Activated CD4-positive, alpha-beta memory T cell treated with anti-CD3 and anti-CD28 coated beads for 36 hours (primary cell): ENCODE measurements at regions of chr9 and their contacts with region 1.

Region 1: GRCh38 chr9:121074635-121075385 is at the start of gene CNTRL:
- DNase-seq: peak; percentile 97
- H3K4me3 Mint-ChIP-seq: peak within 1 kb of the TSS; percentile 100
- H3K27ac Mint-ChIP-seq: peak within 1 kb of the TSS; percentile 85
- H3K4me1 Mint-ChIP-seq: peaks cover 46% of the 10 kb centered on the region
- H3K27me3 Mint-ChIP-seq: no peaks in the 10 kb centered on the region
- total RNA-seq, gene CNTRL: 60.0 to 65.1 TPM

Region 2: DNA sequence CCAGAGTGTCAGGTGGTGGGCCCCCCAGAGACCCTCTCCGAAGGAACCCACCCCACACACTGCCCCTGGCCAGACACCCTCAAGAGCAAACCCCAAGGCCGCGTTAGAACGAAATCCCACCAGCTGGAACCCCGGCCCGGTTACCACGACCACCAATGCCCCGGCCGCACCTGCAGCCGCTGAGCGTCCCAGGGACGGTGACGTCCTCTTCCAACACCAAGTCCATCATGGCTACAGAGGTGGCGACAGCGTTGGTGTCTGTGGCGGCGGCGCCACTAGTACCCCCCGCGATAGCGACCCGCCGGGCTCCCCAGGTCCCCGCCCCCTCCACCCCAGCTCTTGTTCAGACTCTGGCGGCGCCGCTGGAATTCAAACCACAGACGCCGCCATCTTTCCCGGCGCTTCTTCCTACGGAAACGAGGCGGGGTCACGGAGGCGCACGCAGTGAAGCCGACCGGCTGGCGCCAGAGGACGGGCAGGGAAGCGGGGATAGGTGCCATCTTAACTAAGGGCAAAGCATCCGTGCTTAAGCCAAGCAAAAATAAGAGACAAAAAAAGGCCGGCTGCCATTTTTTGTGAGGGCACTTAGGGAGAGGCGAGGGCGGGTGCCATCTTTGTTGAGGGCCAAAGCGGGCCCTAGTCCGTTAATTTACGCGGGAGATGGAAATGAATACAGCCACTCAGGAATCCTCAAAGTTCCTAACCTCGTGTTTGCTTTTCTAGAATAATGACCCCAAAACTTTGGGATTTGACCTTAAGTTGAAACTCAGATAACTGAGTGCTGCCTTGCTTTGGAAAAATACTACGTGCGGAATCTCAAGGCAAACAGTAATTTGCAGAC is 494.8 kb before region 1 on chr9 and contains the start of gene CDK5RAP2:
- CTCF ChIA-PET with region 1: no interaction called
- POLR2A ChIA-PET with region 1: no interaction called
- intact Hi-C with region 1: loop called (anchors 2 kb)
- DNase-seq: peak; percentile 96
- H3K4me3 Mint-ChIP-seq: peak within 1 kb of the TSS; percentile 97
- H3K27ac Mint-ChIP-seq: peak within 1 kb of the TSS; percentile 85
- H3K4me1 Mint-ChIP-seq: peaks cover 45% of the 10 kb centered on the region
- H3K27me3 Mint-ChIP-seq: no peaks in the 10 kb centered on the region
- total RNA-seq, gene CDK5RAP2: 75.3 to 75.9 TPM

Region 3: GRCh38 chr9:120985810-120986222 is 89.0 kb before region 1 on chr9:
- CTCF ChIA-PET with region 1: interaction called, 24 read pairs
- POLR2A ChIA-PET with region 1: no interaction called
- intact Hi-C with region 1: loop called (anchors 1 kb)
- DNase-seq: no peak
- H3K4me3 Mint-ChIP-seq: no peak overlapping the region
- H3K27ac Mint-ChIP-seq: no peak overlapping the region
- H3K4me1 Mint-ChIP-seq: no peaks in the 10 kb centered on the region
- H3K27me3 Mint-ChIP-seq: no peaks in the 10 kb centered on the region

Region 4: DNA sequence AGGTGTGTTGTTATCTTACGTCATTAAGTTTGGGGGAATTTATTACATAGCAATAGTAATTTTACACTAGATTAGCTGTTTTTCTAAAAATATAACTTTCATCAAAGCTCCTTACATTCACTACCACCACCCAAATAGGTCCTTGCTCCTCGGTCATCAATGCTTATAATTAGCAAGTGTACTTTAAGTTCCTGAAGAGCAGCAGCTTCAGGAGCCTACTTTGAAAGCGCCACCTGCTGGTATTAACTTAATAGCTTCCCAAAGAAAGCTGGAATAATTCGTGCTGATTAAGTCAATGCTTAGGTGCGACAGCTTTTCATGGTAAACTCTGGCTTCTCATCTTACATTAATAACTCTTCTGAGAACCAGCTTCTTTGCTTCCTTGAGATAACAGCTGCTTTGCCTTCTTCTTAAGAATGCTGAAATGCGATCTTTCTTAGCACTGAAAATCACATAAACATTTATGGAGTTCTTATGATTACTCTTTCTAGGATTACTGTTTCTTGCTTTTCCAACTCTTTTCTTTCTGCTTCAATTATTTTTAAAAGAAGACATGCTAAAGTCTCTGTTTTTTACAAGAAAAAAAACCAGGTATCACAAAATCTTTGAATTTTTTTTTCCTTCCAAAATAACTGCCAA is 14.7 kb before region 1 on chr9:
- CTCF ChIA-PET with region 1: interaction called, 28 read pairs
- POLR2A ChIA-PET with region 1: no interaction called
- intact Hi-C with region 1: no loop called
- DNase-seq: no peak
- H3K4me3 Mint-ChIP-seq: no peak overlapping the region
- H3K27ac Mint-ChIP-seq: no peak overlapping the region
- H3K4me1 Mint-ChIP-seq: peaks cover 23% of the 10 kb centered on the region
- H3K27me3 Mint-ChIP-seq: no peaks in the 10 kb centered on the region

Region 5: DNA sequence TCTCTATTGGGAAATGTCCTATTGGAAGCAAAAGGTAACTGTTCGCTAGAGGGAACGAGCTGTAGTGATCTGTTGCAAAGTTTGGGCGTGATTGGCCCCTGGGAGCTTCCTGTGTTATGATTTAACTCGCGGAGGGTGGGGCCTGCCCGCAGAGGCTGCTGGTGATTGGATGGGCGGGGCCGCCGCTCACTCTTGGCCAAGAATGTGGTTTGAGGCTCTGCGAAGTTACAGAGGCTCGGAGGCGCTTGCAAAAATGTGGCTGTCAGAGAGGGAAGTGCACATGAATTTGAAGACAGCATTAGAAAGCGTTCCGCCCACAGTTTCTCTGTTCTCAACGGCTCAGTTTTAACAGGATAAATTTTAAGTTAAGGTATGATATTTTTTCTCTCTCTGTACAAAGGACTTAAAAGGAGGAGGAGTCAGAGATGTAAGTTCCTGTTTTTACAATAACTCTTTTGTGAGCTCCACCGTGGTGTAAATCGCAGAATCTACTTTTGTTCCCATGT is 46.8 kb after region 1 on chr9:
- CTCF ChIA-PET with region 1: interaction called, 7 read pairs
- POLR2A ChIA-PET with region 1: interaction called, 3 read pairs
- intact Hi-C with region 1: loop called (anchors 1 kb)
- DNase-seq: peak; percentile 99
- H3K4me3 Mint-ChIP-seq: peak overlapping the region; percentile 77
- H3K27ac Mint-ChIP-seq: peak overlapping the region; percentile 89
- H3K4me1 Mint-ChIP-seq: peaks cover 48% of the 10 kb centered on the region
- H3K27me3 Mint-ChIP-seq: no peaks in the 10 kb centered on the region

Region 6: DNA sequence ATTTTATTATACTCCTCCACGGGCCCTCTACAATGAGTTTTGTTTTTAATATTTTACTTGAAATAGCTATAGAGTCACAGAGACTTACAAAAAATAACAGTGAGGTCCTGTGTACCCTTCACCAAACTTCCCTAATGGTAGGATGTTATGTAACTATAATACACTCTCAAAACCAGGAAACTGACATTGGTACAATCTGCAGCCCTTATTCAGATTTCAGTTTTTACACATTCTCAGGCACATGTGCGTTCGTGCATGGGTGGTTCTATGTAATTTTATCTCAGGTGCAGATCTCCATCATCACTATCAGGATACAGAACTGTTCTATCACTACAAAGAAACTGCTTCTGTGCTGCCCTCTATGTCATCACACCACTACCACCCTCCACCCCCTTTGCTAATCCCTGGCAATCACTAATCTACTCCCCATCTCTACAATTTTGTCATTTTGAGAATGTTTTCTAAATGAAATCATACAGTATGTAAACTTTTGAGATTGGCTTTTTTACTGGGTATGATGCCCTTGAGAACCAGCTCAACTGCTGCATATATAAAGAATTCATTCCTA is 110.5 kb after region 1 on chr9:
- CTCF ChIA-PET with region 1: no interaction called
- POLR2A ChIA-PET with region 1: no interaction called
- intact Hi-C with region 1: loop called (anchors 5 kb)
- DNase-seq: no peak
- H3K4me3 Mint-ChIP-seq: no peak overlapping the region
- H3K27ac Mint-ChIP-seq: peak overlapping the region; percentile 83
- H3K4me1 Mint-ChIP-seq: peaks cover 59% of the 10 kb centered on the region
- H3K27me3 Mint-ChIP-seq: no peaks in the 10 kb centered on the region

Region 7: GRCh38 chr9:121369595-121370265 is 294.9 kb after region 1 on chr9 and contains the start of gene STOM:
- CTCF ChIA-PET with region 1: no interaction called
- POLR2A ChIA-PET with region 1: no interaction called
- intact Hi-C with region 1: loop called (anchors 5 kb)
- DNase-seq: peak; percentile 79
- H3K4me3 Mint-ChIP-seq: peak within 1 kb of the TSS; percentile 93
- H3K27ac Mint-ChIP-seq: peak within 1 kb of the TSS; percentile 99
- H3K4me1 Mint-ChIP-seq: peaks cover 58% of the 10 kb centered on the region
- H3K27me3 Mint-ChIP-seq: no peaks in the 10 kb centered on the region
- total RNA-seq, gene STOM: 49.8 to 51.9 TPM